ENCODE measurements at regions of chr19 and their contacts with region 1.

Region 1: GRCh38 chr19:49118565-49119410 is at the start of gene C19orf73:
- DNase-seq: peak; percentile 91 to 99 (median 95)
- ATAC-seq: peak; percentile 78
- H3K4me3 ChIP-seq: peak within 1 kb of the TSS; percentile 69
- H3K4me3 Mint-ChIP-seq: peak within 1 kb of the TSS; percentile 92
- H3K27ac ChIP-seq: peak within 1 kb of the TSS; percentile 89 to 92
- H3K27ac Mint-ChIP-seq: peak within 1 kb of the TSS; percentile 82
- H3K4me1 ChIP-seq: peaks cover 45% of the 10 kb centered on the region
- H3K4me1 Mint-ChIP-seq: peaks cover 41% of the 10 kb centered on the region
- H3K27me3 ChIP-seq: no peaks in the 10 kb centered on the region
- H3K27me3 Mint-ChIP-seq: no peaks in the 10 kb centered on the region
- CTCF ChIP-seq: peak; percentile 46
- total RNA-seq, gene C19orf73: 1.5 to 2.3 TPM

Region 2: GRCh38 chr19:49106648-49107135 is 12.1 kb before region 1 on chr19:
- CTCF ChIA-PET with region 1: interaction called, 10 read pairs
- POLR2A ChIA-PET with region 1: interaction called, 5 read pairs
- intact Hi-C with region 1: no loop called
- DNase-seq: peak; percentile 53 to 82 (median 62)
- ATAC-seq: peak; percentile 82
- H3K4me3 ChIP-seq: no peak overlapping the region
- H3K4me3 Mint-ChIP-seq: peak overlapping the region; percentile 71
- H3K27ac ChIP-seq: no peak overlapping the region
- H3K27ac Mint-ChIP-seq: peak overlapping the region; percentile 0
- H3K4me1 ChIP-seq: peaks cover 3% of the 10 kb centered on the region
- H3K4me1 Mint-ChIP-seq: no peaks in the 10 kb centered on the region
- H3K27me3 ChIP-seq: no peaks in the 10 kb centered on the region
- H3K27me3 Mint-ChIP-seq: no peaks in the 10 kb centered on the region
- CTCF ChIP-seq: peak; percentile 79

Region 3: GRCh38 chr19:49148784-49149651 is 30.2 kb after region 1 on chr19:
- CTCF ChIA-PET with region 1: interaction called, 17 read pairs
- POLR2A ChIA-PET with region 1: interaction called, 5 read pairs
- intact Hi-C with region 1: loop called in 1 of 2 experiments (anchors 5 kb)
- DNase-seq: peak; percentile 50 to 88 (median 72)
- ATAC-seq: peak; percentile 44
- H3K4me3 ChIP-seq: peak overlapping the region; percentile 62
- H3K4me3 Mint-ChIP-seq: peak overlapping the region; percentile 86
- H3K27ac ChIP-seq: no peak overlapping the region
- H3K27ac Mint-ChIP-seq: no peak overlapping the region
- H3K4me1 ChIP-seq: peaks cover 49% of the 10 kb centered on the region
- H3K4me1 Mint-ChIP-seq: peaks cover 52% of the 10 kb centered on the region
- H3K27me3 ChIP-seq: peaks cover 55 to 56% of the 10 kb centered on the region in 2 experiments
- H3K27me3 Mint-ChIP-seq: peaks cover 88% of the 10 kb centered on the region
- CTCF ChIP-seq: no peak

Measured in CD4-positive, alpha-beta T cell (primary cell).